KBM-7 (cell line): ENCODE measurements at regions of chr5 and their contacts with region 1.

Region 1: DNA sequence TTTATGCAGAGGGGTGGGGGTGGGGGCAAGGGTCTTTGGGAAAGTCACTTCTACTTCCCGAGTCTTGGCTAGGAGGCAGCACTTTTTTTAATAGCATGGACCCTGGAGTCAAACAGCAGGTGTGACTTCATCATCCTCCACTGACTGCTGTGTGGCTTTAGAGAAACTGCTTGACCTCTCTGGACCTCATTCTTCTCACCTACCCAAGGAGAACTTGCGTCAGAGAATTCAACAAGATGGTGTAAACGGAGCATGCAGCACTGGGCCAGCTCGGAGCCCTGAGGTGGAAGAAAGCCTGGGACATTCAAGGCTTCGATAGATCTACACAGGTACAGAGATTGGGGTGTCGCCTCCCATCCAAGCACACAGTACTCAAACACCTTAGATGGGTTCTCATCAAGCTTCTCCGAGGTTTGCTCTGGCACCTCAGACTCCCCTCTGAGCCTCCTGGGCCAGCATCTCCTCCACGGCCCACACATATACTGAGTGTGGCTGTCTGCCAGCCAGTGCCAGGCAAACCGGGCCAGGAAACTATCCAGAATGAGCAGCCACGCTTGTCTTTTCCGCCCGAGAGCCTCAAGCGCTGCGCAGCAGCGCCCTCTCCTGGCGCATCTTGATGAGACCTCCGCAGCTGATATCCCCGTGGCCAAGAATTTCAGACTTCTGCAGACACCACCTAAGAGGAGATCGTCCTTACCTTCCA is 4.6 kb upstream of the SLC25A48 start:
- DNase-seq: peak; percentile 74

Region 2: DNA sequence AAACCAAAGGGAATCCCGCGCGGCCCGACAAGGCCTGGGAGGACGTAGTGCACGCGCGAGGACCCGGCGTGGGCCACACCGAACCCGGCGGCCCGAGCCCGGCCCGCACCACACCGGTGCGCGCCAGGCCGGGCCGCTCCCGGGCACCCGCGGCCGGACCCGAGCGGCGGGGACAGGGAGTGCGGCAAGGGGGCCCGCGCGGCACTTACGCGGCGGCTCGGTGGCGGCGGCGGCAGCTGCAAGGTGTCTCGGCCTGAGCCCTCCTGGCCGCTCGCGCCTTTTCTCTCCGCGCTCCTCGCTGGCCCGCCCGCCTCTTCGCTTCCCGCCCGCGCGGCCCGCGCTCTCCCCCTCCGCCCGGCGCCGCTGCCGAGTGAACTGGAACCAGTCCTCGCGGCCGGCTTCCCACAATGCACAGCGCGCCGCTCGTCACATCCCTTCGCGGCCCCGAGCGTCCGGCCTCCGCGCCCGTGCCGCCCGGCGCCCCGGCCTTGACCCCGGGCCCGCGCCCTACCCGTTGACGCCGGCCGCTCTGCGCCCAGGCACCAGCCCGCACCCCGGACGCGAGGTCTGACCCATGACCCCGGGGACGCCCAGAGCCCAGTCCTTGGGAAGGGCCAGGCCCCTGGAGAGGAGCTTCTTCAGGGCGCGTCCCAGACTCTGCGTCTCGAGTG is 430.8 kb before region 1 on chr5 and contains the start of gene MACROH2A1:
- in situ Hi-C with region 1: no loop called
- DNase-seq: peak; percentile 69

Region 3: GRCh38 chr5:135547590-135548254 is 282.1 kb before region 1 on chr5:
- in situ Hi-C with region 1: no loop called
- DNase-seq: peak; percentile 15

Region 4: DNA sequence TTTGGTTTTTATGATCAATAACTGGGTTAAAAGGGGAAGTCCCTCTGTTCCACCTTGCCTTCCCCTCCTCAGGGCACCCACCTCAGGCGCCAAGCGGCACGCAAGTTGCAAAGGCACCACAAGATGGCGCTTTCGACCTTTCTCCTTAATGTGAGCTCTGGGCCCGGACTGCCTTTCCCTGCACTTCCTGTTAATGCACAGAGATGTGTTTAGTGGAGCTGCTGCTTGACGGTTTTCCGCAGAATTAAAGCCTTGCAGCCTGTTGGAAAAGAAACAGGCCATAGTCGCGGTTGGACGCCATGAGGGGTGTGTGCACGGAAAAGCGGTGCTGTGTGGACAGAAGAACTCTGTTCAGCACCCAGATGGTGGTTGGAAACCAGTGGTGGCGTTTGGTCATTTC is 269.0 kb before region 1 on chr5:
- in situ Hi-C with region 1: loop called (anchors 10 kb)
- DNase-seq: peak; percentile 98